Activated CD4-positive, alpha-beta T cell treated with anti-CD3 and anti-CD28 coated beads, Interleukin-2, amount 10 ng/mL, durations not matched to agents 24 days and 14 days (primary cell): ENCODE measurements at regions of chr20 and their contacts with region 1.

Region 1: DNA sequence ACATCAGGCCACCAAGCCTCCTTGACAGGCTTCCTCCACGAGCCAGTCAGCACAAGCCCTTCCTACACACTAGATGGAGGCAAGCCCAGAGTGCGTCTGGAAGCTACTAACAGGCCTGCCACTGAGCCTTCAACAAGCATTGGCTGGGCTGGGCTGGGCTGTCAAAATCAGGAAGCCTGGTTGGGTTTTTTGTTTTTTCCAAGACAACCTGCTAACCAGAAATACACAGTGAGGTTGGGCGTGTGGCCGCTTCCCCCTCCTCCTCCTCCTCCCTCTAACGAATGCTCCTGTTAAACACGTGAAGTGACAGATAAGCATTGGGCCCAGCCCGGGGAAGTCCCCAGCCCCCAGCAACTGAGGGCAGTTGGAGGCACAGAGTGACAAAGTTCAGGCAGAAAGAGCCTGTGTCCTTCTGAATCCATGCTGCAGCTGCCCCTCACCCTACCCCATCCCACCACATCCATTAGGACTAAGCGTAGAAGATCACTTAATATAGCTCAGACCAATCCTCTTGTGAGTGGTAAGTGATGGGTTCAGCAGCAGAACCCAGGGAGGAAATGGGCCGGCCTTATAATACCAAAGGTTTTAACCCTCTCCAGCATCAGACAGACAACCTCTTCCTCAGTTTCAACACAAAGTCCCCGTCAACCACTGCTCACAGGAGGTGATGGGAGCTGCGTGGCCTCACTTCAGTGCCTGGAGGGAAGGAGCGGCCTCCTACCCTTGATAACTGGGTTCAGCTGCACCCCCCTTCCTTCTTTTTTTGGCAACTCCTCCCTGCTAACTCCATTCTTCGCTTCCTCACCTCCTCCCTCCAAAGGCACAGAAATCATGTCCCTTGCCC is 1.1 kb downstream of the NFATC2 start:
- DNase-seq: peak; percentile 96
- H3K4me3 Mint-ChIP-seq: peak overlapping the region; percentile 95
- H3K27ac Mint-ChIP-seq: peak overlapping the region; percentile 100
- H3K4me1 Mint-ChIP-seq: peaks cover 49% of the 10 kb centered on the region
- H3K27me3 Mint-ChIP-seq: peaks cover 15% of the 10 kb centered on the region

Region 2: DNA sequence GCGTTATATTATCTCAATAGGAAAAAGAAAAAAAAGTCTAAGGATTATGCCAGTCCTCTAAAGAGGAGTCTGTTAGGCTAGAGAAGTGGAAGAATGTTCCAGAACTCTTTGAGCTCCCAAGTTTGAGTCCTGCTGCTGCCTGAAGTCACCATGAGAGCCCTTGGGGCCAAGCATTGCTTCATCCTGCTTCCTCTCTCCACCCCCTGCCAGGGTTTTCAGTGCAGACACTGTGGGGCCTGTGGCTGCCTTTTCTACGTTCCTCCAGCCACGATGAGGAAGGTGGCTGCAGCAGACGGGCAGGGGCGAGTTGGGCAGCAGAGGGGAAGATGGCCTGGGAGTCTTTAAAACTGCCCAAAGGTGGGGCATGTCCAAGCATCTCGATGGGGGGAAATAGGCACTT is 304.1 kb before region 1 on chr20:
- intact Hi-C with region 1: no loop called
- DNase-seq: no peak
- H3K4me3 Mint-ChIP-seq: no peak overlapping the region
- H3K27ac Mint-ChIP-seq: no peak overlapping the region
- H3K4me1 Mint-ChIP-seq: no peaks in the 10 kb centered on the region
- H3K27me3 Mint-ChIP-seq: peaks cover 13% of the 10 kb centered on the region

Region 3: DNA sequence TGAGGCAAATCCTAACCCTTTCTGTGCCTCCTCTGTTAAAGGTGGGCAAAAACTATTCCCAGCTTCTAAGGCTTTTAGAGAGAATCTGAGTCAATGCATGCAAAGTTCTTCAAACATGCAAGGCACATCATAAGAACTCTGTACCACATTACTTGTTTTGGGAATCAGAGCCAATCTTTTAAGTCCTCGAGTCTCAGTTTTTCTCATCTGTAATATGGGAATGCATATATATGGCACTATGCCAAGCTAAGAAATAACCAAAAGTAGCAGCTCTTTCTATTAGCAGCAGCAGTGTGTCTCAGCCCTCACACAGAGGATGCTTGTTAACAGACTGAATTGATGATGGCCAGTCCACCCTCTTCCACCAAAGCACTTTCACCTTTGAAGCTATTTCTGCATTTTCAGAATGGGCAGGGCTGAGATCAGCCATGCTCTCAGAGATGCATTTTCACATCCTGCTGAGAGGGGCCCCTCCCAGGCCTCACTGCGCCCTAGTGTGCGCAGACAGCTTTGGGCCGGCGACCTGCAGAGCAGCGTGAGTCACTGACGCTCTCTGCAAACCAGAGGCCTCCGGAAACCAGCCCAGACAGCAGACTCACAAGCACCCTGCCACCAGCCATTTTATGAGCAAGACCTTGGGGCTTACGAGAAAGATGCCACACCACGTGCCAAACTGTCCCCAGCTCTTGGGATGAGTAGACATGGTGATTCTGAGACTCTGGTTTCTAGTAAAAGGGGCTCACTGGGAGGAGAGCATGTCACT is 136.9 kb before region 1 on chr20:
- intact Hi-C with region 1: loop called (anchors 1 kb)
- DNase-seq: peak; percentile 94
- H3K4me3 Mint-ChIP-seq: peak overlapping the region; percentile 75
- H3K27ac Mint-ChIP-seq: peak overlapping the region; percentile 97
- H3K4me1 Mint-ChIP-seq: peaks cover 81% of the 10 kb centered on the region
- H3K27me3 Mint-ChIP-seq: no peaks in the 10 kb centered on the region

Region 4: GRCh38 chr20:51480507-51481270 is 60.7 kb before region 1 on chr20:
- intact Hi-C with region 1: loop called (anchors 1 kb)
- DNase-seq: peak; percentile 84
- H3K4me3 Mint-ChIP-seq: peak overlapping the region; percentile 82
- H3K27ac Mint-ChIP-seq: peak overlapping the region; percentile 96
- H3K4me1 Mint-ChIP-seq: peaks cover 81% of the 10 kb centered on the region
- H3K27me3 Mint-ChIP-seq: no peaks in the 10 kb centered on the region

Region 5: DNA sequence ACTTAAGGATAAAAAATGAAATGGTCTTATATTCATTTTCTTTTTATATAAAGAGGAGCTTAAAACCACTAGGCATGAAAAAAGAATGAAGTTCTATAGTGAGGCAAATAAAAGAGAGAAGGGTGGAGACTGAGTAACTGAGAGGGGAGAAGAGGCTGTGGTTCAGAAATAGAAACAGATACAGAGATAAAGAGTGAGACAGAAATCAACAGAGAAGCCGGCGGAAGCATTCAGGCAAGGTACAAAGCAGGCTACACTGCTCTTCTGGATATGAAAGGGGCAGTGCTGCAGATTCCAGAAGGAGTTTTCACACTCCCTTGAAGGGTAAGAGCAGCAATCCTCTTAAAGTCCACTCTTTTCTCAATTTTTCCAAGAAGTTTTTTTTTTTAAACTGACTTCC is 28.8 kb before region 1 on chr20:
- intact Hi-C with region 1: loop called (anchors 1 kb)
- DNase-seq: peak; percentile 81
- H3K4me3 Mint-ChIP-seq: peak overlapping the region; percentile 31
- H3K27ac Mint-ChIP-seq: peak overlapping the region; percentile 84
- H3K4me1 Mint-ChIP-seq: peaks cover 66% of the 10 kb centered on the region
- H3K27me3 Mint-ChIP-seq: no peaks in the 10 kb centered on the region

Region 6: GRCh38 chr20:51531141-51531710 is 10.2 kb before region 1 on chr20:
- intact Hi-C with region 1: loop called (anchors 1 kb)
- DNase-seq: peak; percentile 84
- H3K4me3 Mint-ChIP-seq: peak overlapping the region; percentile 74
- H3K27ac Mint-ChIP-seq: peak overlapping the region; percentile 98
- H3K4me1 Mint-ChIP-seq: peaks cover 76% of the 10 kb centered on the region
- H3K27me3 Mint-ChIP-seq: no peaks in the 10 kb centered on the region

Region 7: DNA sequence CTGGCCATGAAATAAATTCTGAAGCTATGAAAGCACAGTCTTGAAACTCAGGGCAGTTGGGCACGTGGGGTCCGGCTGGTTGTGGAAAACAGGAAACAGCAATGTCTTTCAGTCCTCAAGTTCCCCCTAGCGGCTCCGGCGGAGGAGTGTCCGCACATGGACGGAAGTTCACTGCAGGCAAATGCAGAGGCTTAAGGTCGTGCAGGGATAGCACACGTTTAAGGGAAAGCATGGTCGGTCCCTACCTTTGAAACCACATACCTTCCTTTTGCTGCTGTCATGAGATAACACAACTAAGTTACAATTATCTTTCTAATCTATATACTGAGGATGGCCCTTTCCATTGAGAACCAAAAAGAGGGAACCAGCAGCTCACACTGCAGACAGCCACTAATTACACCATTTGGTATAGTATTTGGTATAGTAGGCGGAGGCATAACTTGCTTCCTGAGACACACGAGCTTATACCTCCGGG is 53.7 kb after region 1 on chr20:
- intact Hi-C with region 1: loop called (anchors 2 kb)
- DNase-seq: peak; percentile 93
- H3K4me3 Mint-ChIP-seq: peak overlapping the region; percentile 58
- H3K27ac Mint-ChIP-seq: peak overlapping the region; percentile 63
- H3K4me1 Mint-ChIP-seq: peaks cover 43% of the 10 kb centered on the region
- H3K27me3 Mint-ChIP-seq: peaks cover 2% of the 10 kb centered on the region

Region 8: GRCh38 chr20:51661609-51662178 is 120.3 kb after region 1 on chr20:
- intact Hi-C with region 1: no loop called
- DNase-seq: peak; percentile 80
- H3K4me3 Mint-ChIP-seq: no peak overlapping the region
- H3K27ac Mint-ChIP-seq: peak overlapping the region; percentile 39
- H3K4me1 Mint-ChIP-seq: peaks cover 21% of the 10 kb centered on the region
- H3K27me3 Mint-ChIP-seq: peaks cover 8% of the 10 kb centered on the region

Region 9: GRCh38 chr20:51918016-51918415 is 376.6 kb after region 1 on chr20:
- intact Hi-C with region 1: no loop called
- DNase-seq: no peak
- H3K4me3 Mint-ChIP-seq: no peak overlapping the region
- H3K27ac Mint-ChIP-seq: no peak overlapping the region
- H3K4me1 Mint-ChIP-seq: no peaks in the 10 kb centered on the region
- H3K27me3 Mint-ChIP-seq: no peaks in the 10 kb centered on the region

Region 10: DNA sequence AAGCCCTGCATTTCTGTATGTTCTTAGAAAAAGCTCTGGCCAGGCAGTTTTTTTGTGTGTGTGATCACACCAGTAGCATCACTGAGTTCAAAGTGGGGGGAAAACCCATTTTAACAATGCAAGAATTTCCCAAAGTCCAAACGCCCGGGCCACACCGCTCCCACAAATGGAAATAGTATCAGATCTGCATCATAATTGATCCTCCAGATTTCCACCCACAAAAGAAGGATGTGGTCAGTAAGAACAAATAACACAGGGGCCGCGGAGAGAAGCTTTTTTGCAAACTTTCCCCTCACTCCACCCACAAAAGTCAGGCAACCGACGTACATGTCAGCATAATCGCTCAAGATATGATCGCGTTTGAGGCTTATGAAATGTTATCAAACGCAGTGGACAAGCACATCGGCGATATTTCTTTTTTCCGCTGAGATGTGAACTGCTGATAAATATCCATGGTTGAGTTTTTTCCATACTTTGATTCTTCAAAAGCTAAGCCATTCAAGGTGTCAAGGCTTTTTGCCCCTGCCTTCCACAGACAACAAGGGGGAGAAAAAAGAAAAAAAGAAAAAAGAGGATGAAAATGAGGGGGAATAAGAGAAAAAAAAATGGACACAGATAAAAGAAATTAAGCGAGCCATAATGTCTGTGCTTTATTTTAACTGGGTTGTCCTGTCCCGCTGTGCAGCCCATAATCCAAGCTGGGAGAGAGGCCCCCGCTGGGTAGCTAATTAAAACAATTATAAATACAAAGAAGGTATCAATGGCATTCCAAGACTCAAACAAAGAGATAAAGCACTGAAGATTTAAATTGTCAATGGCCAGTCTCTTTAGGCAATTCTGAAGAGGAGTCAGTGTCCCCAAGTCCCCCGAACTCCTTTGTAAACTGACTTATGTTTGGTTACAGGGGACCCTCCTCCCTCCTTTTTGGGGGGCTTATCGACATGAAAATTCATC is 506.7 kb after region 1 on chr20:
- intact Hi-C with region 1: loop called (anchors 10 kb)
- DNase-seq: peak; percentile 81
- H3K4me3 Mint-ChIP-seq: peak overlapping the region; percentile 63
- H3K27ac Mint-ChIP-seq: peak overlapping the region; percentile 85
- H3K4me1 Mint-ChIP-seq: peaks cover 30% of the 10 kb centered on the region
- H3K27me3 Mint-ChIP-seq: peaks cover 4% of the 10 kb centered on the region